ENCODE measurements at regions of chr10 and their contacts with region 1.

Region 1: DNA sequence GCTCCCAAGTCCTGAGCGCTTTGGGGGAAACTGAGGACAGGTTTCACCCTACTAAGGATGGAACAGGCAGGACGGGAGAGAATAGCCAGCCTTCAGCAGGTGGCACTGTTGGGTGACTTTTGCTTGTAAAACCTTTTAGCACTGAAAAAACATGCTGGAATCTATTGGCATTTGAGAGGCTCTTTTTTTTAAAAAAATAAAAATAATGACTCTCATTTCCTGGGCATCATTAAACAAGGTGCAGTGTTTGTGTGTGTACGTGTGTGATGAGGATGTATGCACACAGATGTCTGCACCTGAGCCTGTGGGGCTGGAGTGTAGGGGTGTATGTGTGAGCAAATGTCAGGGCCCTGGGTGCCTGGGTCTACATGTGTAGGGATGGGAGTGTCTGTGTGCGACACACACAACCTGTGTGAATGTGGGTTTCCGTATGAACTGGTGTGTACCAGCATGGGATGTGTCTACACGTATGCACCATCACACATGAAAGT is 177.9 kb downstream of the RPS24 start:
- DNase-seq: peak in 2 of 3 donors; percentile 34 to 71
- ATAC-seq: no peak
- H3K4me3 ChIP-seq: no peak overlapping the region
- H3K27ac ChIP-seq: peak overlapping the region; percentile 31
- H3K4me1 ChIP-seq: peaks cover 12% of the 10 kb centered on the region
- H3K27me3 ChIP-seq: no peaks in the 10 kb centered on the region

Region 2: GRCh38 chr10:78082636-78083035 is 129.0 kb before region 1 on chr10:
- intact Hi-C with region 1: no loop called
- DNase-seq: no peak
- ATAC-seq: no peak
- H3K4me3 ChIP-seq: no peak overlapping the region
- H3K27ac ChIP-seq: no peak overlapping the region
- H3K4me1 ChIP-seq: no peaks in the 10 kb centered on the region
- H3K27me3 ChIP-seq: no peaks in the 10 kb centered on the region

Region 3: GRCh38 chr10:78139341-78139740 is 72.3 kb before region 1 on chr10:
- intact Hi-C with region 1: no loop called
- DNase-seq: peak in 2 of 3 donors; percentile 50 to 60
- ATAC-seq: peak; percentile 36 to 56
- H3K4me3 ChIP-seq: no peak overlapping the region
- H3K27ac ChIP-seq: no peak overlapping the region
- H3K4me1 ChIP-seq: peaks cover 2% of the 10 kb centered on the region
- H3K27me3 ChIP-seq: no peaks in the 10 kb centered on the region

Region 4: DNA sequence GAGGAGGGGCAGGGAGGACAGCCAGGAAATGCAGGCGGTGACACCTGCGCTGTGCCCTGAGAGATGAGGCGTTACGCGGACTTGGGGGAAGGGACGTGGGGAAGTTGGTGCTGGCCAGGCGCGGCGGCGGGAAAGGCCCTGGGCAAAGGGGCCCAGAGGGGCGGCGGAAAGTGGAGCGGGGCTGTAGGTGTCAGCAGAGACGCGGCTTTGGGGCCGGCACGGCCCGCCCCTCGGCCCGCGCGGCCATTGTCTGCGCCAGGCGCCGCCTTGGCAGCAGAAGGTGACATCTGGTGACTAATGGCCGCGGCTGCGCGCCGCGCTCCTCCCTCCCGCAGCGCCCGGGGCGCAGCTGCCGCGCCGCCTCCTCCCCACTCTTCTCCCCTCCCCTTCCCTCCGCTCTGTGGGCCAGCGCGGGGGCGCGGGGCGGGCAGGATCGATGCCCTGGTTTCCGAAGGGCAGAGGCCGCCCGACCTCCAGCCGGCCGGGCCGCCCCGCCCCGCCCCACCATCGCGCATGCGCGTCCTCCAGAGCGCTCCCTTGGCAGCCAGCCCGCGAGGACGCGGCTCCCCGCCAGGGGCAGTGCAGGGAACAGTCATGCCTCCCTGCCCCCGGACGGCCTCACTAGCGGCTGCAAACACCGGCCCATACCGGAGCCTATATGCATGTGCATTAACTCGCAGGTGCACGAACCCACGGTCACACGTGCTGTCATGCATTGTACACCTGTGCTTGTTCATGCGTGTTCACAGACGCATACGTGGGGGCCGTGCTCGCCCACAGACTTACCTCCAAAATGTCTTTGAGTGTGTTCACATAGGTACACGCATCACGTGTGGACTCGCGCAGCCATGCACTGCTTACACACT is 91.6 kb after region 1 on chr10:
- intact Hi-C with region 1: loop called in 1 of 4 experiments (anchors 10 kb)
- DNase-seq: peak; percentile 95 to 99 (median 98)
- ATAC-seq: peak; percentile 97 to 99
- H3K4me3 ChIP-seq: peak overlapping the region; percentile 51
- H3K27ac ChIP-seq: peak overlapping the region; percentile 82
- H3K4me1 ChIP-seq: no peaks in the 10 kb centered on the region
- H3K27me3 ChIP-seq: no peaks in the 10 kb centered on the region

Region 5: DNA sequence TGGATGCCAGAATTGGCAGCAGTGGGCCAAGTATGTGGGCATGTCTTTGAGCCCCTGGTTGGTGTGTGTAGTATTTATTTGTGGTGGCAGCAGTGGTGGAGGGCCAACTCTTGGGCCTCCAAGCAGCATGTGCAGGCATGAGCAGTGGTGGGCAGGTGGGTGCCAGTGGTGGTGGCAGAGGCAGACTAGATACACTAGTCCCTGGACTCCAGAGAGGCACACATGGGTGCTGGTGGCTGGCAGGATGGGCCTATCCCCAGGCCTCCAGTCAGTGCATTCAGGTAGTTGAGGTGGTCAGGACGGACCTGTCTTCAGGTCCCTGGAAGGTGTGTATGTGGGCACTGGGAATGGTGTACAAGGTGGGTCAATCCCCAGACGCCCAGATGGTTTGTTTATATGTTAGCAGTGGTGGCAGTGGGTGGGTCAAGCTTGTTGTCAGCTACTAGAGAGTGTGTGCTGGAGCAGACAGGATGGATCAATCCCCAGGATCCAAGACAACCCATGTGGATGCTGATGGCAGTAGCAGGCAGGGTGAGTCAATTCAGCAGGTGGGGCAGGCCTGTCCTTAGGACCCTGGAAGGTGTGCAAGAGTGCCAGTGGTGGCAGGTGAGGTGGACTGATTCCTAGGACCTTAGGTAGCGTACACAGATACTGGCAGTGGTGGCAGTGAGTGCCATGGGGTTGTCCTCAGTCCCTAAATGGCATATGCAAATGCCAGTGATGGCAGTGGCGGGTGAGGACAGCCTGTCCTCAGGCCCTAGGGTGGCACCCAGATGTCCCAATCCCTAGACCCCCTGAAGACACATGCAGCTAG is 116.4 kb after region 1 on chr10:
- intact Hi-C with region 1: no loop called
- DNase-seq: no peak
- ATAC-seq: no peak
- H3K4me3 ChIP-seq: no peak overlapping the region
- H3K27ac ChIP-seq: no peak overlapping the region
- H3K4me1 ChIP-seq: no peaks in the 10 kb centered on the region
- H3K27me3 ChIP-seq: no peaks in the 10 kb centered on the region